ENCODE measurements at regions of chr13 and their contacts with region 1.

Region 1: GRCh38 chr13:73754727-73755292 is 379.4 kb downstream of the KLF12 start:
- DNase-seq: no peak
- ATAC-seq: peak; percentile 86
- H3K4me3 ChIP-seq: no peak overlapping the region
- H3K27ac ChIP-seq: no peak overlapping the region
- H3K4me1 ChIP-seq: no peaks in the 10 kb centered on the region
- H3K27me3 ChIP-seq: no peaks in the 10 kb centered on the region
- CTCF ChIP-seq: peak; percentile 52 to 79 (median 68); a peak in 5 of 6 replicates
- EP300 ChIP-seq: no peak
- POLR2A ChIP-seq: no peak
- RAD21 ChIP-seq: peak; percentile 73

Region 2: GRCh38 chr13:73715114-73715910 is 39.5 kb before region 1 on chr13:
- CTCF ChIA-PET with region 1: no interaction called
- POLR2A ChIA-PET with region 1: no interaction called
- RAD21 ChIA-PET with region 1: no interaction called
- SMC1A ChIA-PET with region 1: no interaction called
- in situ Hi-C with region 1: no loop called
- intact Hi-C with region 1: no loop called
- DNase-seq: peak; percentile 31
- ATAC-seq: peak; percentile 94
- H3K4me3 ChIP-seq: no peak overlapping the region
- H3K27ac ChIP-seq: peak overlapping the region; percentile 66
- H3K4me1 ChIP-seq: peaks cover 10% of the 10 kb centered on the region
- H3K27me3 ChIP-seq: no peaks in the 10 kb centered on the region
- CTCF ChIP-seq: no peak
- EP300 ChIP-seq: 0 out of 4 replicates have a peak, but pooled peaks of 1 of the 2 experiments have one; percentile 16
- POLR2A ChIP-seq: no peak
- RAD21 ChIP-seq: no peak

Region 3: DNA sequence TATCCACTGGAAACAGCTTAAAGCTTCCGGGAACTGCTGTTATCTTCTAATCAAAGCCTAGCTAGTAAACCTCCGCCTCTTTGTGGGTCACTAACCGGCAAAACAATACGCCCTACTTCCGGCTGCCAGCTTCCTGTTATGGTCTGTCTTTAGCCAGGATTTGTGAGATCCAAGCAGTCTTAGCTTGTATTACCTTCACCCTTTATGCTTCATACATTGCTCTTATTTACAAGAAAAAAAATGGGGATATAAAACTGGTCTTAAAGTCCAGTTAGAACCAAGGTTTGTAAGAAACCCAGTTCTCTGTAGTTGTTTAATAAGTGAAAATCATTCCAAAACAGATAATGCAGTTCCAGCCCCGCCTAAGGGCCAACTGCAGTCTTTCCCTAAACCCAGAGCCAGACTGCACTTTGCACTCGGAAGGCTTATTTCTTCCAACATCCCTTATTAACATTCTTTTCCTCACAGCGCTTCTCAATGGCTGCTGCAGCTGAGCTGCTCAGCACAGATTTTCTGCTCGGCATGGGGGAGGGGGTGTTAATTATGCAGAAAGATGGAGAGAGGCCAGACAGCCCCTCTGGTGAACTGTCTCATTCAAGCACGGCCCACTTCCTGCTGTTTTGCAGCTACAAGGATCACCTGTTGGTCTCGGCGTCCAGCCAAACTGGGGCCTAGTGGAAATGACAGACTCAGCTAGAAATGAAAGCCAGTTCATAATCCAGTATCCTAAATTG is 11.0 kb after region 1 on chr13:
- CTCF ChIA-PET with region 1: interaction called, 40 read pairs
- POLR2A ChIA-PET with region 1: no interaction called
- RAD21 ChIA-PET with region 1: interaction called, 17 read pairs
- SMC1A ChIA-PET with region 1: interaction called, 34 read pairs
- in situ Hi-C with region 1: no loop called
- intact Hi-C with region 1: no loop called
- DNase-seq: no peak
- ATAC-seq: peak; percentile 83
- H3K4me3 ChIP-seq: no peak overlapping the region
- H3K27ac ChIP-seq: peak overlapping the region; percentile 42; the same call in 1 of the 2 replicates
- H3K4me1 ChIP-seq: peaks cover 19% of the 10 kb centered on the region
- H3K27me3 ChIP-seq: no peaks in the 10 kb centered on the region
- CTCF ChIP-seq: no peak
- EP300 ChIP-seq: no peak
- POLR2A ChIP-seq: peak; percentile 32; the same call in 1 of the 2 replicates
- RAD21 ChIP-seq: no peak

Region 4: DNA sequence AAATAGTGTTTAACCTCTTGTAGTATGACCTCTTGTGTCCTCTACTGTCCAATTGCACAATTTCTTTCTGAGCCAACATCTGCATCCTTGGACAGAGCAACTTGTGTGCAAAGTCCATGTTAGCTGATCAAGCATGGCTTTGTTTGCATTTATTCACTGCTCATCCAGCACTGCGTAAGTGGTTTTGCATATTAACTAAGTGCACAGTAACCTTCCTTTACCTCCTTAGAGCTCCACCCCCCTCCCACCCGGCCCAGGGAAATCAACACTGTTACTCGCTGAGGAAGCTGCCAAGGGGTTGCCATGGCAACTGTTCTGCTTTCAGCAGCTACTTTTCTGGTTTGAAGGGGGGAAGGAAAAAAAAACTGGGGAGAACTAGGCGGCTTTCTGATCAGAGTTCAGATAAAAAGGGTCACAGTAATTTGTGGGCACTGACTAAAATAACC is 532.9 kb after region 1 on chr13:
- CTCF ChIA-PET with region 1: interaction called, 13 read pairs
- POLR2A ChIA-PET with region 1: no interaction called
- RAD21 ChIA-PET with region 1: interaction called, 8 read pairs
- SMC1A ChIA-PET with region 1: interaction called, 20 read pairs
- in situ Hi-C with region 1: loop called (anchors 10 kb)
- intact Hi-C with region 1: loop called (anchors 2 kb)
- DNase-seq: no peak
- ATAC-seq: peak; percentile 55
- H3K4me3 ChIP-seq: no peak overlapping the region
- H3K27ac ChIP-seq: no peak overlapping the region
- H3K4me1 ChIP-seq: no peaks in the 10 kb centered on the region
- H3K27me3 ChIP-seq: peaks cover 2 to 5% of the 10 kb centered on the region in 2 experiments; a peak in 1 of 4 replicates
- CTCF ChIP-seq: no peak
- EP300 ChIP-seq: no peak
- POLR2A ChIP-seq: no peak
- RAD21 ChIP-seq: no peak

Measured in GM12878 (cell line).